RWPE1 (cell line): ENCODE measurements at regions of chr15 and their contacts with region 1.

Region 1: GRCh38 chr15:40857601-40858341 is 13.9 kb downstream of the SPINT1 start:
- DNase-seq: peak; percentile 94
- H3K27ac ChIP-seq: peak overlapping the region; percentile 12
- CTCF ChIP-seq: peak; percentile 99

Region 2: GRCh38 chr15:40847205-40847961 is 10.4 kb before region 1 on chr15:
- CTCF ChIA-PET with region 1: interaction called, 16 read pairs
- POLR2A ChIA-PET with region 1: interaction called, 6 read pairs
- DNase-seq: peak; percentile 78
- H3K27ac ChIP-seq: peak overlapping the region; percentile 68
- CTCF ChIP-seq: no peak

Region 3: GRCh38 chr15:40873625-40874561 is 16.1 kb after region 1 on chr15 and contains the start of gene RHOV:
- CTCF ChIA-PET with region 1: interaction called, 107 read pairs
- POLR2A ChIA-PET with region 1: interaction called, 7 read pairs
- DNase-seq: peak; percentile 74
- H3K27ac ChIP-seq: peak within 1 kb of the TSS; percentile 29; the same call in 1 of the 2 replicates
- CTCF ChIP-seq: no peak; the same call in 1 of the 2 replicates

Region 4: DNA sequence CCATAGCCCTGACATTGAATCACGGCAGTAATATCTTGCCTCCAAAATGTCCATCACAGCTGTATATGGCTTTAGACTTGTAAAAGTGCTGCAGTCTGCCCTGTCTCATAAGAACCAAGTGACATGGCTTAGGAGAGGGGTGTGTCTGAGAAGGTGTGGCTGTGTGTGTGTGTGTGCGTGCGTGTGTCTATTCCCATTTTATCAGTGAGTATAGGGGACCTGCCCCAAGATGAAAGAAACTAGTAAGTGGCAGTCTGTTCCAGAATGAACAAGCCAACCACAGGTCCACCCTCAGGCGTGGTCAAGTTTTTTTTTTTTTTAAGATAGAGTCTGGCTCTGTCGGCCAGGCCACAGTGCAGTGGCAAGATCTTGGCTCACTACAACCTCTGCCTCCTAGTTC is 21.8 kb after region 1 on chr15:
- CTCF ChIA-PET with region 1: interaction called, 107 read pairs
- POLR2A ChIA-PET with region 1: interaction called, 7 read pairs
- DNase-seq: no peak
- H3K27ac ChIP-seq: peak overlapping the region; percentile 67
- CTCF ChIP-seq: no peak

Region 5: DNA sequence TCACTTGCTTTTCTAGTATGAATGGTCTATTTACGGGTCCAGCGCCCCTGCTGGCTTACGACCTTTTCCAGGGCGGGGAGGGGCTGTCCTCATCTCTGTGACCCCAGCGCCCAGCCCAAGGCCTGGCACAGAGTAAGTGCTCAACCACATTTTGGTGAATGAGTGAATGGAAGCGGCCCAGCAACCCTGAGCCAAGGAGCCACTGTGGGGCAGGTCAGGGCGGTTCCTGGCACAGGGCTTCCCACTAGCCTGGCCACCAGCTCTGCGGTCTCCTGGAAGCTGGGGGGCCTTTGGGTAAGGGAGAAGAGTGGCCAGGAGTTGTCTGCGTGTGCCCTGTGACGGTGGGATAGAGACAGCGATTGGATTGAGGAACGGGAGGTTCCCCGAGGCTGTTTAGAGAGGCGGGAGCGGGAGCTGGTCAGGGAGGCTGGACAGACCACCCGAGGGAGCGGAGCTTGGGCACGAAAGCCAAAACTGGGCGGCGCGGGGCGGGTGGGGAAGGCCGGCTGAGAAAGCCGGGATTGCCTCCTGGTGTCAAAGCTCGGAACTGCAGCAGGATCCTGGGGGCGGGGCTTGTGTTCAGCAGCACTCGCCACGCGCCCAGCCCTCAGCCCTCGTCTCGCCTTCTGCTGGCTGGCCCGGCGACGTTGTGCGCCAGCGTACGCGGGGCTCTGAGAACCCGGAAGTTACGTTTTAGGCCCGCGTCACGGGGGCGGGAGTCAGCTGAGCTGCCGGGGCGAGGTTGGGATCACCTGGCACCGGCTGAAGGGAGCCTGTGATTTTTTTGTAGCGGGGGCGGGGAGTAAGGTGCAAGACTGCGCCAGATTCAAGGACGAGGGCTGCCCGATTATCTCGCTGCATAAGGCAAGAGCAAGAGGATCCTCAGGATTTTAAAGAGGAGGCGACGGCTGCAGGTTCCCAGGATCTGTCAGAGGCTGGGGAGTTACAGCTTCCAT is 36.2 kb after region 1 on chr15 and contains the start of gene VPS18:
- CTCF ChIA-PET with region 1: interaction called, 157 read pairs
- POLR2A ChIA-PET with region 1: interaction called, 6 read pairs
- DNase-seq: peak; percentile 92
- H3K27ac ChIP-seq: peak within 1 kb of the TSS; percentile 89
- CTCF ChIP-seq: peak; percentile 98